ENCODE measurements at regions of chr6 and their contacts with region 1.

Region 1: GRCh38 chr6:17015144-17015543 is 86.7 kb upstream of the STMND1 start:
- DNase-seq: peak; percentile 71
- H3K4me3 Mint-ChIP-seq: peak overlapping the region; percentile 52
- H3K27ac Mint-ChIP-seq: no peak overlapping the region
- H3K4me1 Mint-ChIP-seq: peaks cover 10% of the 10 kb centered on the region
- H3K27me3 Mint-ChIP-seq: peaks cover 37% of the 10 kb centered on the region

Region 2: DNA sequence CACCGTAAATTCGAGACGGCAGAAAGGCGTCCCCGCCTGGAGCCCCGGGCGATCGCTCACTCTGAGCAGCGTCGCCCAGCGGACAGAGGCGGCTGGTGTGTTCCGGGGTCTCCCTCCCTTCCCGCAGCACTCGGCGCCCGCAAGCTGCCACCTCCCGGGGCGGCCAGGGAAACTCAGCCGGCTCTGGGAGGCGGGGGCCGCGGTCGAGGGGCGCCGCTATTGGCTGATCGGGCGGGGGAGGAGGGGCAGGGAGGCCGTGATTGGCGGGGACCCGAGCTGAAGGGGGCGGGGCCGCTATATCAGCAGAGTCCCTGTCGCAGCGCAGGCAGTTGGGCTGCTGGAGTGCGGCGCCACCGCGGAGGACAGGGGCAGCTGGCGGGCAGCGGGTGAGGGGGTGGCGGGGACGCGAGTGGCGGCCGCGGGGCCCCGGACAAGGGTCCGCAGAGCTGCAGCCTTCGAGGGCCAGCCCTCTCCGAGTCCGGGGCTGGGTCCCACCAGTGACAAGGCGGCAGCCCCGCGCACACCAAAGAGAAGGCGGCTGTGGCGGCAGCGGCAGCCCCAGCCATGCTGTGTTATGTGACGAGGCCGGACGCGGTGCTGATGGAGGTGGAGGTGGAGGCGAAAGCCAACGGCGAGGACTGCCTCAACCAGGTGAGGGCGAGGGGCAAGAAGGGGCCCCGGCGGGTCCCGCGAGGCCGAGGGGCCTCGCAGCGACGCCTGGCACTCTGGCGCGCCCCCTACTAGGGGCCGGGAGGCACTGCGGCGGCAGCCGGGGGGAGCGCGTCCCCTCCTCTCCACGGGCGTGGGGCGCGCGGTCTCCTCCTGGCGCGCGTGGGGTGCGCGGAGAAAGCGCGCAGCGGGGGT is 886.2 kb before region 1 on chr6 and contains the start of gene MYLIP:
- intact Hi-C with region 1: loop called (anchors 5 kb)
- DNase-seq: peak; percentile 98
- H3K4me3 Mint-ChIP-seq: peak within 1 kb of the TSS; percentile 91
- H3K27ac Mint-ChIP-seq: peak within 1 kb of the TSS; percentile 93
- H3K4me1 Mint-ChIP-seq: peaks cover 32% of the 10 kb centered on the region
- H3K27me3 Mint-ChIP-seq: peaks cover 20% of the 10 kb centered on the region
- total RNA-seq, gene MYLIP: 18.3 and 18.5 TPM in 2 replicates